ENCODE measurements at regions of chr7 and their contacts with region 1.

Region 1: GRCh38 chr7:95916573-95917297 is 144.4 kb downstream of the DYNC1I1 start:
- DNase-seq: peak; percentile 79
- ATAC-seq: peak; percentile 68
- H3K4me3 Mint-ChIP-seq: no peak overlapping the region
- H3K27ac Mint-ChIP-seq: no peak overlapping the region
- H3K4me1 Mint-ChIP-seq: no peaks in the 10 kb centered on the region
- H3K27me3 Mint-ChIP-seq: peaks cover 13% of the 10 kb centered on the region

Region 2: GRCh38 chr7:95905165-95905564 is 11.6 kb before region 1 on chr7:
- CTCF ChIA-PET with region 1: interaction called, 12 read pairs
- POLR2A ChIA-PET with region 1: no interaction called
- DNase-seq: no peak
- ATAC-seq: no peak
- H3K4me3 Mint-ChIP-seq: no peak overlapping the region
- H3K27ac Mint-ChIP-seq: no peak overlapping the region
- H3K4me1 Mint-ChIP-seq: no peaks in the 10 kb centered on the region
- H3K27me3 Mint-ChIP-seq: peaks cover 4% of the 10 kb centered on the region

Region 3: GRCh38 chr7:95929710-95930280 is 13.1 kb after region 1 on chr7:
- CTCF ChIA-PET with region 1: interaction called, 12 read pairs
- POLR2A ChIA-PET with region 1: no interaction called
- DNase-seq: no peak
- ATAC-seq: no peak
- H3K4me3 Mint-ChIP-seq: no peak overlapping the region
- H3K27ac Mint-ChIP-seq: no peak overlapping the region
- H3K4me1 Mint-ChIP-seq: no peaks in the 10 kb centered on the region
- H3K27me3 Mint-ChIP-seq: peaks cover 3% of the 10 kb centered on the region

Region 4: DNA sequence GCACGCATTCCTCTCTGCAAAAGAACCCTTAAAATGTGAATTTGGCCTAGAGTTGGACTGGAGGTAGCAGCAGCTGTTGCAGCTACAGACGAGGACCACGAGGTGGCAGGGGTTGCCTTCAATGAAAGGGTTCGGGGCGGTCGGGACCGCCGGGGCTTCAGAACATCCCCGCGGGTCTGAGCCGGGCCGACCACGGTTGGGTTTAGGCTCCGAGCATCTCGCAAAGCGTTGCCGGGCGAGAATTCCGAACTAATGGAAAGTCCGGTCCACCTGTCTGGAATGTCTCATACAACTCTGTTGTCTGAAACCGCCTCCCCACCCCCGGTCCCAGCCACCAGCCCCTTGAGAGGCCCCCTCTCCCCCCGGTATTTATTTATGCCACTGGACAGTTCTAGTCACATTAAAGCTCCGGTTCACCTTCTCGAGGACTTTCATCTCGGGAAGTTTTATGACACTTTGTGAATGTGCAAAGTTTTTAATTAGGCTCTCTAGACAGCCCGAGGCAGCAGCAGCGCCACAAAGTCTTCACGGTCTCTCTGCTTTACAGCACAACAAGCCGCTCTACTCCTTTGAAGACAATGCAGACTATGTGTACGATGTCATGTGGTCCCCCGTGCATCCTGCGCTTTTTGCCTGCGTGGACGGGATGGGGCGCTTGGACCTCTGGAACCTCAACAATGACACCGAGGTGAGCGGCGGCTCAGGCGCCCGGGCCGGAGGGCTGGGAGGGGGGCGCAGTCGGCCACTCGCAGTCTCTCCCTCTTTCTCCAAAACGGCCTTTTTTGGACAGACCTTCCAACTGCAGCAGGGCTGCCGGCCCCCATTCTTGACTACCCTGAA is 159.0 kb after region 1 on chr7:
- CTCF ChIA-PET with region 1: no interaction called
- POLR2A ChIA-PET with region 1: no interaction called
- DNase-seq: peak; percentile 58
- ATAC-seq: peak; percentile 93
- H3K4me3 Mint-ChIP-seq: peak overlapping the region; percentile 72
- H3K27ac Mint-ChIP-seq: no peak overlapping the region
- H3K4me1 Mint-ChIP-seq: peaks cover 5% of the 10 kb centered on the region
- H3K27me3 Mint-ChIP-seq: peaks cover 36% of the 10 kb centered on the region

Measured in activated CD8-positive, alpha-beta T cell treated with anti-CD3 and anti-CD28 coated beads, Interleukin-2, amount 10 ng/mL, durations not matched to agents 7 days and 5 days (primary cell).